CD14-positive monocyte (primary cell): ENCODE measurements at regions of chr15 and their contacts with region 1.

Region 1: DNA sequence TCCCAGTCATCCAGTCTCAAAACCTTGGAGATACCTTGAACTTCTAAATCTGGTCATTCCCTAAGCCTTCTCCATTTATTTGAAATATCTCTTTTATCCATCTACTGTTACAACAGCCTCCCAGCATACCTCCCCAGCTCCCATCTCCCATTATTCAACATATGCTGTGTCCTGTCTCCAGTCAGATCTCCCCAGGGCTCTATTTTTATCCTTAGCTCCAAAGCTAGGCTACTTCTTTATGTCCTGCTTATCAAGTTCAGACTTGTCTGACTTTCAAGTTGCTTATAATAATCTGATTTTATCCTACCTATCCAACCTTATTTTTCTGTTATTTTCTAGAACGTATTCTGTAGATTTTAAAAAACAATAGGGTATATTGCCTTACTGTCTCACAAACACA is 44.2 kb downstream of the IQGAP1 start:
- DNase-seq: no peak
- H3K4me3 ChIP-seq: no peak overlapping the region
- H3K4me3 Mint-ChIP-seq: no peak overlapping the region
- H3K27ac ChIP-seq: peak overlapping the region in 1 of 2 donors; percentile 50
- H3K27ac Mint-ChIP-seq: peak overlapping the region in 3 of 7 donors; percentile 3 to 74 (median 33)
- H3K4me1 ChIP-seq: peaks cover 0 to 3% of the 10 kb centered on the region in 2 donors
- H3K4me1 Mint-ChIP-seq: peaks cover 8% of the 10 kb centered on the region
- H3K27me3 ChIP-seq: no peaks in the 10 kb centered on the region
- H3K27me3 Mint-ChIP-seq: peaks cover 0 to 3% (median 0%) of the 10 kb centered on the region in 3 donors
- CTCF ChIP-seq: no peak

Region 2: GRCh38 chr15:90394748-90395442 is 37.4 kb before region 1 on chr15:
- intact Hi-C with region 1: loop called in 1 of 2 experiments (anchors 5 kb)
- DNase-seq: no peak
- H3K4me3 ChIP-seq: no peak overlapping the region
- H3K4me3 Mint-ChIP-seq: no peak overlapping the region
- H3K27ac ChIP-seq: peak overlapping the region in 1 of 2 donors; percentile 63
- H3K27ac Mint-ChIP-seq: peak overlapping the region in 5 of 7 donors; percentile 20 to 89 (median 86)
- H3K4me1 ChIP-seq: peaks cover 59 to 86% of the 10 kb centered on the region in 2 donors
- H3K4me1 Mint-ChIP-seq: peaks cover 71% of the 10 kb centered on the region
- H3K27me3 ChIP-seq: no peaks in the 10 kb centered on the region
- H3K27me3 Mint-ChIP-seq: peaks cover 0 to 4% (median 0%) of the 10 kb centered on the region in 3 donors
- CTCF ChIP-seq: no peak

Region 3: DNA sequence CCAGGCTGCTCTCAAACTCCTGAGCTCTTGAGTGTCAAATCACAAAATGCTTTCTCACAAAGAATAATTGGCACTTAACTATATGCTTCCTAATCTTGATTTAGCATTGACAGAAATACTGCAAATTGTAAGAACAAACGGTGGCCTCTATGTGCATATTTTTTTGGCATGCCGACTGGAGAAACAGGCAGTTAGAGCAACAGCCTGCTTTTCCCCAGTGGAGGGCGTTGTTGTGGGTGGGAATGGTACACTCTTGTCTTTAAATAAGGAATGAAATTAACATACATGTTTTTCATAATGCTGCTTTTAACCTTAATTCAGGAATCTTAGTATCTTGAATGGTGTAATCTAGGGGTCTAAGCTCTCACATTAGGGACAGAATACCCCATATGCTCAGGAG is 636.7 kb after region 1 on chr15:
- intact Hi-C with region 1: no loop called
- DNase-seq: no peak
- H3K4me3 ChIP-seq: no peak overlapping the region
- H3K4me3 Mint-ChIP-seq: no peak overlapping the region
- H3K27ac ChIP-seq: no peak overlapping the region
- H3K27ac Mint-ChIP-seq: no peak overlapping the region
- H3K4me1 ChIP-seq: no peaks in the 10 kb centered on the region
- H3K4me1 Mint-ChIP-seq: peaks cover 5% of the 10 kb centered on the region
- H3K27me3 ChIP-seq: peaks cover 2 to 3% of the 10 kb centered on the region in 2 donors
- H3K27me3 Mint-ChIP-seq: peaks cover 9 to 19% (median 12%) of the 10 kb centered on the region in 3 donors
- CTCF ChIP-seq: no peak